ENCODE measurements at regions of chr3 and their contacts with region 1.

Region 1: DNA sequence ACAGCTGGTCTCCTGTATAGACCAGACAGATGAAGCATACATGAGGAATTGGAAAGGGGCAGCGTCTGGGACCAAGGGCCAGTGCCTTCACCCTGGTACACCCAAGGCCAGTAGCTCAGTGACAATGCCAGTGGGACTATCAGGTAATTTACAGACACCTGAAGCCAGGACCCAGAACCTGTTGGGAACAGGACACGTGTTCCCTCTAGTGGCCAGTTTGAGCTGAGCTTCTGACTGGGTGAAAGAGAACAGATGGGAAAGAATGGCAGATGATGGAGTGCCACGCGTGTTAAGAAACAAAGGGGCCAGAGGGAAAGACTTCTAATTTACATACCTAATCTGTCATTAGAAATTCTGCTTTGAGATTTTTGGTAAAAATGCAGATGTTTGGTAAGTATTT is 5.1 kb upstream of the SLC25A38 start:
- DNase-seq: peak in 1 of 2 experiments; percentile 34
- H3K4me3 ChIP-seq: no peak overlapping the region
- H3K27ac ChIP-seq: no peak overlapping the region
- H3K4me1 ChIP-seq: peaks cover 8% of the 10 kb centered on the region; the same call in 1 of the 2 replicates
- H3K27me3 ChIP-seq: peaks cover 10% of the 10 kb centered on the region; the same call in 1 of the 2 replicates
- CTCF ChIP-seq: peak; percentile 71

Region 2: GRCh38 chr3:39189959-39190269 is 188.2 kb before region 1 on chr3:
- CTCF ChIA-PET with region 1: no interaction called
- POLR2A ChIA-PET with region 1: no interaction called
- intact Hi-C with region 1: loop called (anchors 5 kb)
- DNase-seq: peak; percentile 47 to 51
- H3K4me3 ChIP-seq: no peak overlapping the region
- H3K27ac ChIP-seq: no peak overlapping the region
- H3K4me1 ChIP-seq: no peaks in the 10 kb centered on the region
- H3K27me3 ChIP-seq: no peaks in the 10 kb centered on the region
- CTCF ChIP-seq: peak; percentile 77

Region 3: GRCh38 chr3:39361252-39361927 is 16.7 kb before region 1 on chr3:
- CTCF ChIA-PET with region 1: no interaction called
- POLR2A ChIA-PET with region 1: no interaction called
- intact Hi-C with region 1: no loop called
- DNase-seq: no peak
- H3K4me3 ChIP-seq: no peak overlapping the region
- H3K27ac ChIP-seq: no peak overlapping the region
- H3K4me1 ChIP-seq: no peaks in the 10 kb centered on the region
- H3K27me3 ChIP-seq: peaks cover 3% of the 10 kb centered on the region
- CTCF ChIP-seq: no peak

Region 4: DNA sequence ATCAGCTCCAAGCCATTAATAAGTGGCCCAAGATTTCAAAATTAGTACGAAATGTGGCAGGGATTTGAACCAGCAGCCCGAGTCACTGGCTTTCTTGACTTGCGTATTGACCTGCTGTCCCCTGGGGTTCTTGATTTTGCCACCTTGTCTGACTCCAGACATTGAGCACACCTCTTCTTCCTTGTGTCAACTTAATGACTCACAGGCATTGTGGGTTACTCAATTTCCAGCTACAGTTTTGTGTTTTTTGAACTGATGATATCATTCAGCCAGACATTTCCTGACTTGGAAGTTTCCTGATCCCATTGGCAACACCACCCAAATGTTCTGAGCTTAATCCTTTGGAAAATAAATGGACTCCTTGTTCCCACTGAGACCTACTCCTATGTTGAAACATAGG is 153.6 kb after region 1 on chr3:
- CTCF ChIA-PET with region 1: no interaction called
- POLR2A ChIA-PET with region 1: no interaction called
- intact Hi-C with region 1: no loop called
- DNase-seq: peak in 1 of 2 experiments; percentile 39
- H3K4me3 ChIP-seq: no peak overlapping the region
- H3K27ac ChIP-seq: no peak overlapping the region
- H3K4me1 ChIP-seq: no peaks in the 10 kb centered on the region
- H3K27me3 ChIP-seq: no peaks in the 10 kb centered on the region; the same call in 1 of the 2 replicates
- CTCF ChIP-seq: no peak